Heart left ventricle (tissue), 16 donors: ENCODE measurements at regions of chr16 and their contacts with region 1.

Region 1: GRCh38 chr16:17994027-17994426 is 342.5 kb downstream of the NPIPA8 start:
- DNase-seq: no peak
- ATAC-seq: no peak
- H3K4me3 ChIP-seq: no peak overlapping the region
- H3K27ac ChIP-seq: no peak overlapping the region
- H3K4me1 ChIP-seq: no peaks in the 10 kb centered on the region
- H3K27me3 ChIP-seq: peaks cover 0 to 16% (median 0%) of the 10 kb centered on the region in 9 donors
- CTCF ChIP-seq: no peak
- POLR2A ChIP-seq: no peak

Region 2: DNA sequence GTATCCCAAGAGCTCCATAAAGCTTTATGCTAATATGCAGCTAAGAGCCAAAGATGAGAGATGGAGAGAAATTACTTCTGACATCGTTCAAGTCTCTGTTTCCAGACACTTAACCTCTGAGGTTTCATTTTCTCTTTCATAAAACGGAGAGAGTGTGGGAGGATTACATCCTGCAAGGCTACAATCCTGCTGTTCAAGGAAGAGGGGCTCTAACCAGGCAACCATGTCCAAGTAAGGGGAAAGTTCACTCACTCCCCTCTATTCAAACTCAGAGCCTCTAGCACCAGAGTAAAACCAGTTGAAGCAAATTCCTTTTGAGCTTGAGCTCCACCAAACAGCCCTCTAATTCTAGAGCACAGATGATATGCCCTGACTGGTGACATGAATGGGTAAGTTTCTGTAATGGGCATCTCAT is 54.9 kb before region 1 on chr16:
- intact Hi-C with region 1: loop called in 1 of 10 experiments (anchors 10 kb)
- DNase-seq: no peak
- ATAC-seq: no peak
- H3K4me3 ChIP-seq: no peak overlapping the region
- H3K27ac ChIP-seq: no peak overlapping the region
- H3K4me1 ChIP-seq: no peaks in the 10 kb centered on the region
- H3K27me3 ChIP-seq: no peaks in the 10 kb centered on the region
- CTCF ChIP-seq: no peak
- POLR2A ChIP-seq: no peak

Region 3: DNA sequence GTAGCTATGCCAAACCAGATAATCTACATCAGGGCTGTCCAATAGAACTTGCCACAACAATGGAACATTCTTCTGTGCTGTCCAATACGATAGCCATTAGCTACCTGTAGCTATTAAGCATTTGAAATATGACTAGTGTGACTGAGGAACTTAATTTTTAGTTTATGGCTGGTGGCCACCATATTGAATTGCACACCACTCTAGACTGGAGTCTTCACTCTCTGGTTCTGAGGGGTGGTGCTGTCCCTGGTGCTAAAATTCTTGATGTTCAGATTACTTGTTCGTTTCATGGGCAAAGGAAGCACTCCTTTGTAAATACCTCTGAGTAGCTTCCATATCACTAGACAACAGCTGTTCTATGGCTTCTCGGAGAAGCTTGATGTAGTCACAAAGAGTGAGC is 45.9 kb after region 1 on chr16:
- intact Hi-C with region 1: no loop called
- DNase-seq: no peak
- ATAC-seq: no peak
- H3K4me3 ChIP-seq: no peak overlapping the region
- H3K27ac ChIP-seq: no peak overlapping the region
- H3K4me1 ChIP-seq: no peaks in the 10 kb centered on the region
- H3K27me3 ChIP-seq: peaks cover 0 to 3% (median 0%) of the 10 kb centered on the region in 9 donors
- CTCF ChIP-seq: no peak
- POLR2A ChIP-seq: no peak